Panc1 (cell line): ENCODE measurements at regions of chr22 and their contacts with region 1.

Region 1: DNA sequence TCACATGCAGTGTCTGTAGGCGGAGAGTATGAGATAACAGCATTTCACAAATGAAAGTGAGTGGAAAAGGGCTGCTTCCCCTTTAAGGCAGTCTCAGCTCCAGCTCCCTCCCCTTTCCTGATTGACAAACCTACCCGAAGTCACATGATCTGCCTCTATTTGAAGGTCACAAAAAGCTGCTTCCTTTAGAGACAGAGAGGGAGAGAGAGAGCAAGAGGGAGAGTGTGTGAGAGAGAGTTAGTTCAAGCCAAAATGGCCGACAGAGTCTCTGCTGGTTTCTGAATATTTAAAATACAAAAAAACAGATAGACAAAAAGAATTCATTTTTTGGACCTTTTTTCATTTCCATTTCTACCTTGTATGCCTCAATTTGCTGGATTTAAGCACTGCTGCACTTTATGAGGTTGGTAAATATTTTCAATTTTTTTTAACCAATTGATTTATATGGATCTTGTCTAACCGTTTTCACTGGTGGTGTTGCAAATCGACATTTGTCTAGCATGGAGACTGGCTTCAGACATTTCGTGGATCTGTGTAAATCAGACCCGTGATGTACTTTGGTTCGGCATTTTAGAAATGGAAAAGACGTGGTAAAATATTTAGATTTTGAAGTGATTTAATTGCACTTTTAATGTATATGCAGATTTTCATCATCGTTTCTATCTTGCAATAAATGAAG is at the start of gene TNRC6B:
- DNase-seq: peak; percentile 83
- ATAC-seq: peak; percentile 94
- H3K4me3 ChIP-seq: peak within 1 kb of the TSS; percentile 90
- H3K27ac ChIP-seq: peak within 1 kb of the TSS; percentile 98
- H3K4me1 ChIP-seq: peaks cover 30% of the 10 kb centered on the region
- H3K27me3 ChIP-seq: no peaks in the 10 kb centered on the region
- CTCF ChIP-seq: no peak
- total RNA-seq, gene TNRC6B: 30.7 TPM

Region 2: DNA sequence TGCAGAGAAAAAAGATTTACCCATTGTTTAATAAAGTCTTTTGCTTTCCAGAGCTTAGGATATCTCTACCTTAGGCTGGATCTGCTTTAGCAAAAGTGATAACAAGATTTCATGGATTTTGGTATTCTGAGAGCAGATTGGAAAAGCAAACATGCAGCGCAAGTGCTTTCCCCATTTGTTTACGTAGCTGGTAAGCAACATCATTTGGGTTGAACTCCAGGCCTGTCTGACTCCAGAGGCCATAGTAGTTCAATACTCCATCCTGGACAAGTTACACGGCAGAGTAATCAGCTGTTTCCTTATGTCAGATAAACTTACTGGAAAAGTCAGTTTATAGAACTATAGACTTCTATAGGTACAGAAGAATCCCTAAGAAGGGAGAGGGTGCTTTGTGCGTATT is 40.7 kb before region 1 on chr22:
- CTCF ChIA-PET with region 1: no interaction called
- POLR2A ChIA-PET with region 1: interaction called, 16 read pairs
- in situ Hi-C with region 1: no loop called
- intact Hi-C with region 1: no loop called
- DNase-seq: no peak
- ATAC-seq: no peak
- H3K4me3 ChIP-seq: no peak overlapping the region
- H3K27ac ChIP-seq: no peak overlapping the region
- H3K4me1 ChIP-seq: no peaks in the 10 kb centered on the region
- H3K27me3 ChIP-seq: no peaks in the 10 kb centered on the region
- CTCF ChIP-seq: no peak

Region 3: DNA sequence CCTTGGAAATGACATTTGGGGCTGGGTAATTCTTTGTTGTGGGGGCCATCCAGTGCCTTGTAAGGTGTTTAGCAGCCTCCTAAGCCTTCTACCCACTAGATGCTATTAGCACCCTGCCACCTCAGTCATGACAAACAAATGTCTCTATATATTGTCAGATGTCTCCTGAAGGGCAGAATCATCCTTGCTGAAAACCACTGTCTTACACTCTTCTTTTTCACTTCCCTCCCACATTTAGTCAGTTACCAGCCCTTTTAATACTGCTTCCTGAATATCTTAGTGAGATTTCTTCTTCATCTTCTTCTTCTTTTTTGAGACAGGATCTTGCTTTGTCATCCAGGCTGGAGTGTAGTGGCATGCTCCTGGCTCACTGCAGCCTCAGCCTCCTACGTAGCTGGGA is 32.9 kb after region 1 on chr22:
- CTCF ChIA-PET with region 1: no interaction called
- POLR2A ChIA-PET with region 1: no interaction called
- in situ Hi-C with region 1: no loop called
- intact Hi-C with region 1: no loop called
- DNase-seq: no peak
- ATAC-seq: no peak
- H3K4me3 ChIP-seq: no peak overlapping the region
- H3K27ac ChIP-seq: no peak overlapping the region
- H3K4me1 ChIP-seq: no peaks in the 10 kb centered on the region
- H3K27me3 ChIP-seq: no peaks in the 10 kb centered on the region
- CTCF ChIP-seq: no peak

Region 4: GRCh38 chr22:40258451-40259046 is 80.7 kb after region 1 on chr22:
- CTCF ChIA-PET with region 1: no interaction called
- POLR2A ChIA-PET with region 1: no interaction called
- in situ Hi-C with region 1: no loop called
- intact Hi-C with region 1: no loop called
- DNase-seq: no peak
- ATAC-seq: no peak
- H3K4me3 ChIP-seq: no peak overlapping the region
- H3K27ac ChIP-seq: no peak overlapping the region
- H3K4me1 ChIP-seq: no peaks in the 10 kb centered on the region
- H3K27me3 ChIP-seq: no peaks in the 10 kb centered on the region
- CTCF ChIP-seq: no peak

Region 5: GRCh38 chr22:40567106-40567505 is 389.2 kb after region 1 on chr22:
- CTCF ChIA-PET with region 1: no interaction called
- POLR2A ChIA-PET with region 1: no interaction called
- in situ Hi-C with region 1: no loop called
- intact Hi-C with region 1: no loop called
- DNase-seq: peak; percentile 10
- ATAC-seq: no peak
- H3K4me3 ChIP-seq: no peak overlapping the region
- H3K27ac ChIP-seq: 0 out of 2 replicates have a peak overlapping the region, but pooled peaks have one; percentile 10
- H3K4me1 ChIP-seq: peaks cover 14% of the 10 kb centered on the region; the same call in 1 of the 2 replicates
- H3K27me3 ChIP-seq: no peaks in the 10 kb centered on the region
- CTCF ChIP-seq: no peak